GM10248 (cell line): ENCODE measurements at regions of chr18 and their contacts with region 1.

Region 1: GRCh38 chr18:42298759-42299675 is 344.0 kb downstream of the PIK3C3 start:
- DNase-seq: peak; percentile 56
- CTCF ChIP-seq: peak; percentile 82

Region 2: DNA sequence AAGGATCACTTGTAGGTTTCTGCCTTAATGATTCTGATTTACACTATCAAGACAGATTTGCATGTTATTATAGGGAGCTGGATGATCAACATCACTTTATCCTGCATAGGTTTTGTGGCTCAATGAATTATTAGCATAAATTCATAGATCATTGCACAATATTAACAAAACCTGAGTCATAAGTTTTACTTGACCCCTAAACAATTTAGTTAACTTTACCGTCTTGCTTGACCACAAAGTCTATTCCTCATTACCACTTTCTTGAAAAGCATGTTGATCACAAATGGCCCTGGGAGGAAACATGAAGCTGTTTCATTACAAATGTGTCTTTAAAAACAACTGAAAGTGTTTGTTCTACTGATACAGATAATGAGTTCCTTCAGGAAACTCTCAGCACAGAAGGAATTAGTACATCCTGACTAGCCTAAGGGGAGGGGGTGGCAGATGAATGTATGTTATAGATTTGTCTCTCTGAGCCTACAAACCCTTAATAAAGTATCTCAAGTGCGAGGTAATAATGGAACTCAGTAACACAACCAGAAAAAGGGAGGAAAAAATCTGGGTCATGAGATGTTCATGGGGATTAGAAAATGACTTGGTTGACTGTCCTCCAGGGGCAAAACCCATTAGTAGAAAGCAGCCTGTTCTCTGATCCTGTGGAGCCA is 40.6 kb before region 1 on chr18:
- CTCF ChIA-PET with region 1: no interaction called
- POLR2A ChIA-PET with region 1: no interaction called
- DNase-seq: no peak
- CTCF ChIP-seq: no peak

Region 3: DNA sequence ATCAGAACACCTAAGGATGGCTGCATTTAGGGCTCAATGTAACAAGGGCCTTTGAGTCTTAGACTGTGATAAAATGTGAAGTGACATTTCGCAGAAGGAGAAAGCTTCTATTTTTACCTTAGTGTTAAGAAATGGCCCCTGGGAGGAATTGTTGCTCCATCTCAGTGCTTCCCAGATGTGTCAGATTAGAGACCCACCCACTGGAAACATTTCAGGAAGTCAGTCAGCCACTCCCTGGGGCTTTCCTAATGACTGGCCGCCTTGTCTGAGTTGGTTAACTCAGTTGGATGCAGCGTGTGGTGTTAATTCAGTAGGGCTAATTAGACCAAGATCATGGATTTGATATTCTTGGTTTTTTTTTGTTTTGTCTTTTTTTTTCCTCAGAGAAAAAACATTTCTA is 11.9 kb after region 1 on chr18:
- CTCF ChIA-PET with region 1: interaction called, 39 read pairs
- POLR2A ChIA-PET with region 1: no interaction called
- DNase-seq: no peak
- CTCF ChIP-seq: no peak

Region 4: GRCh38 chr18:43271593-43272432 is 972.8 kb after region 1 on chr18:
- CTCF ChIA-PET with region 1: interaction called, 44 read pairs
- POLR2A ChIA-PET with region 1: no interaction called
- DNase-seq: peak; percentile 17
- CTCF ChIP-seq: peak; percentile 81

Region 5: GRCh38 chr18:43587538-43588153 is 1288.6 kb after region 1 on chr18:
- CTCF ChIA-PET with region 1: interaction called, 11 read pairs
- POLR2A ChIA-PET with region 1: no interaction called
- DNase-seq: peak; percentile 31
- CTCF ChIP-seq: peak; percentile 44